ENCODE measurements at regions of chr17 and their contacts with region 1.

Region 1: GRCh38 chr17:75430159-75430974 is 24.9 kb upstream of the GRB2 start:
- DNase-seq: no peak
- ATAC-seq: no peak
- H3K4me3 ChIP-seq: no peak overlapping the region
- H3K4me3 Mint-ChIP-seq: no peak overlapping the region
- H3K27ac ChIP-seq: no peak overlapping the region
- H3K27ac Mint-ChIP-seq: no peak overlapping the region
- H3K4me1 ChIP-seq: peaks cover 17% of the 10 kb centered on the region
- H3K4me1 Mint-ChIP-seq: peaks cover 11 to 16% of the 10 kb centered on the region in 2 donors
- H3K27me3 ChIP-seq: no peaks in the 10 kb centered on the region
- H3K27me3 Mint-ChIP-seq: no peaks in the 10 kb centered on the region
- CTCF ChIP-seq: no peak

Region 2: GRCh38 chr17:75515496-75516254 is 85.3 kb after region 1 on chr17 and contains the start of gene CASKIN2:
- intact Hi-C with region 1: loop called (anchors 1 kb)
- DNase-seq: peak; percentile 72 to 89
- ATAC-seq: peak; percentile 64 to 83 (median 67)
- H3K4me3 ChIP-seq: peak within 1 kb of the TSS; percentile 83
- H3K4me3 Mint-ChIP-seq: peak within 1 kb of the TSS; percentile 80
- H3K27ac ChIP-seq: no peak within 1 kb of the TSS
- H3K27ac Mint-ChIP-seq: peak within 1 kb of the TSS in 1 of 2 donors; percentile 88
- H3K4me1 ChIP-seq: peaks cover 40% of the 10 kb centered on the region
- H3K4me1 Mint-ChIP-seq: peaks cover 19 to 23% of the 10 kb centered on the region in 2 donors
- H3K27me3 ChIP-seq: no peaks in the 10 kb centered on the region
- H3K27me3 Mint-ChIP-seq: no peaks in the 10 kb centered on the region
- CTCF ChIP-seq: peak; percentile 93
- total RNA-seq, gene CASKIN2: 0.49 to 1.8 (median 1.7) TPM

Region 3: GRCh38 chr17:75589012-75589918 is 158.9 kb after region 1 on chr17:
- intact Hi-C with region 1: loop called (anchors 1 kb)
- DNase-seq: peak; percentile 86 to 95
- ATAC-seq: peak; percentile 78 to 89 (median 82)
- H3K4me3 ChIP-seq: peak overlapping the region; percentile 70
- H3K4me3 Mint-ChIP-seq: peak overlapping the region; percentile 79
- H3K27ac ChIP-seq: peak overlapping the region; percentile 45
- H3K27ac Mint-ChIP-seq: peak overlapping the region in 1 of 2 donors; percentile 80
- H3K4me1 ChIP-seq: peaks cover 30% of the 10 kb centered on the region
- H3K4me1 Mint-ChIP-seq: peaks cover 7 to 25% of the 10 kb centered on the region in 2 donors
- H3K27me3 ChIP-seq: no peaks in the 10 kb centered on the region
- H3K27me3 Mint-ChIP-seq: no peaks in the 10 kb centered on the region
- CTCF ChIP-seq: peak; percentile 48

Region 4: DNA sequence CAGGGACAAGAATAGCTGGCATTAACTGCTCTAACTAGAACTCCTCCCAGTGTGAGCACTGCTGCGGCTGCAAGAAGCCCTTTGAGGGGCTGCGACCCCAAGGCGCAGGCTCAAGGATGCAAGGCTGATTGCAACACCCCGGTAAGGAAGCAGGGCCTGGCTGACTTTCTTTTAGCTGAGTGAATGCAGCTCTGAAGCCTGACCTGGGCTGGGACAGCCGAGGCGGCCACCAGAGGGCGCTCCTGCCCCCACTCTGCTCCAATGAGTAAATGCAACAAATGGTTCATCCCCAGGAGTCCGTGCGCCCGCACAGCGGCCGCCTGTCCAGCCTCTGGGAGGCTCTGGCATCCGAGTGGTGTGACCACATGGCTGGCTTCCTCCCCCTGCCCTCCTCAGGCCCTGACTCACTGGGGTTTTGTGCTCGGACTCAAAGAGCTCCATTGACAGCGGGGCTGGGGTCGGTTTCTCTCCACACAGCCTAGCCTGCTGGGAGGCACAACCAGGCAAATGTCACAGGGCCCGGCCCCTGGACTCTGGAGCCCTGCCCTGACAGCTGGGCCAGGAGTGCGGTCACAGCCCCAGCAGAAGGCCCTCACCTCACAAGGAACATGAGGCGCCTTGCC is 202.6 kb after region 1 on chr17 and contains the start of gene SMIM5:
- intact Hi-C with region 1: loop called (anchors 1 kb)
- DNase-seq: peak; percentile 81 to 88
- ATAC-seq: peak; percentile 88 to 97 (median 90)
- H3K4me3 ChIP-seq: no peak within 1 kb of the TSS
- H3K4me3 Mint-ChIP-seq: no peak within 1 kb of the TSS
- H3K27ac ChIP-seq: no peak within 1 kb of the TSS
- H3K27ac Mint-ChIP-seq: peak within 1 kb of the TSS in 1 of 2 donors; percentile 31
- H3K4me1 ChIP-seq: peaks cover 17% of the 10 kb centered on the region
- H3K4me1 Mint-ChIP-seq: peaks cover 0 to 5% of the 10 kb centered on the region in 2 donors
- H3K27me3 ChIP-seq: no peaks in the 10 kb centered on the region
- H3K27me3 Mint-ChIP-seq: no peaks in the 10 kb centered on the region
- CTCF ChIP-seq: peak; percentile 82
- total RNA-seq, gene SMIM5: 0.95 to 2.0 (median 1.5) TPM

Region 5: DNA sequence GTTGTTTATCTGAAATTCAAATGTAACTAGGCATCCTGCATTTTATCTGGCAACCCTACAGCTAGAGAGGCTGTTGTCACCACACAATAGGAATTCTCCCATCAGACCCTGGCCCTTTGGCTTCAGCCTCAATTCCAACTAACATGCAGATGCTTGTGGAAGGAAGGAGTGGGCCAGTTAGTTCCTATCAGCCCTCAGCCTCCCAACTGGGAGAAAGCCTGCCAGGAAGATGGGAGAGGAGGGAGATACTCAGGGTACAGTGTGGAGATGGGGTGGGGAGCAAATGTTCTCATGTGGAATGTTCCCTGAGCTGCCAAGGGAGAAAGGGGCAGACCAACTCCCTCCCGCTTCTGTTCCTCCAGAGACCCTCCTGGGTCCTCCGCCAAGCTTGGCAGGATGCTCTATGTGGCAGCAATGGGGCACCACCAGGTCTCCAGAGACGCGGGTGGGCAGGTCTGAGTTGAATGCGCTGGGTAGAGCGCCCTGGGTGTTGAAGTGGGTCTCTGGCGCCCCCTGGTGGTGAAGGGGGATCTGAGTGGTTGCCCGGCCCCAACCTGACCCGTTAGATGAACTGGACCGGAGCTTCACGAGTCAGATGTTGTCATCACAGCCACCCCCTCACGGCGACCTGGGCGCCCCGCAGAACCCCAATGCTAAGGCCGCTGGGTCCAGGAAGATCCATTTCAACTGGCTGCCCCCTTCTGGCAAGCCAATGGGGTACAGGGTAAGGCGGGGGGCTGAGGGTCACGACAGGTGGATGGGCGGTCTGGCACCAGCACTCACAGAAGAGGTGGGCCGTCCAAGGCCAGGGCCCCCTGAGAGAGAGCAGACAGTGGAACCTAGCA is 319.4 kb after region 1 on chr17:
- intact Hi-C with region 1: loop called (anchors 2 kb)
- DNase-seq: peak; percentile 89 to 91
- ATAC-seq: peak; percentile 72 to 85 (median 72)
- H3K4me3 ChIP-seq: no peak overlapping the region
- H3K4me3 Mint-ChIP-seq: peak overlapping the region; percentile 45
- H3K27ac ChIP-seq: no peak overlapping the region
- H3K27ac Mint-ChIP-seq: no peak overlapping the region
- H3K4me1 ChIP-seq: peaks cover 31% of the 10 kb centered on the region
- H3K4me1 Mint-ChIP-seq: peaks cover 13 to 16% of the 10 kb centered on the region in 2 donors
- H3K27me3 ChIP-seq: no peaks in the 10 kb centered on the region
- H3K27me3 Mint-ChIP-seq: peaks cover 3 to 7% of the 10 kb centered on the region in 2 donors
- CTCF ChIP-seq: peak; percentile 89

Measured in natural killer cell (primary cell).